ENCODE measurements at regions of chr17 and their contacts with region 1.

Region 1: GRCh38 chr17:75325827-75326225 is 36.6 kb upstream of the SLC25A19 start:
- DNase-seq: no peak
- ATAC-seq: no peak
- H3K4me3 Mint-ChIP-seq: peak overlapping the region; percentile 57
- H3K27ac Mint-ChIP-seq: peak overlapping the region; percentile 88
- H3K4me1 Mint-ChIP-seq: peaks cover 82% of the 10 kb centered on the region
- H3K27me3 Mint-ChIP-seq: no peaks in the 10 kb centered on the region
- CTCF ChIP-seq: no peak

Region 2: DNA sequence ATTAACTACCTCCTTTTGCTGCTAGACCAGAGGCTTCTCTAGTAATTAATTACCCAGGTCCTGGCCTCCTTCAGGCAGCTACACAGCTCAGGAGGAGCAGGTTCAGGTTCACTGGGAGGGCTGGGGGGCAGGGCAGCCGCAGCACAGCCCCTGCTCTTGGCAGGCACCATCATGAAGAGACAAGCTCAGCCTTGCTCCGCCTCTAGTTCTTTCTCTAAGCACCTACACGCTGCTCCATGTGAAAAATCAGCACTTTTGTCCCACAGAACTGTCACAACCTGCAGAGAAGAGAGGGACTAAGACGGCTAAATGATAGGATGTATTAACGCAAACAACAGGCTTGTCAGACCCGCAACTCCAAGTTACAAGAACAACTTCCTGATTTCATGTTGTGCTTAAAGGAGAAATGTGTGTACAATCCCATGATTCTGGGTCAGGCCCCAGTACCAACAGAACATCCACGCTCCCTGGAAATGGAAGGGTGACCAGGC is 26.3 kb after region 1 on chr17:
- CTCF ChIA-PET with region 1: interaction called, 9 read pairs
- POLR2A ChIA-PET with region 1: interaction called, 18 read pairs
- intact Hi-C with region 1: no loop called
- DNase-seq: no peak
- ATAC-seq: peak; percentile 45
- H3K4me3 Mint-ChIP-seq: peak overlapping the region; percentile 41
- H3K27ac Mint-ChIP-seq: peak overlapping the region; percentile 57
- H3K4me1 Mint-ChIP-seq: peaks cover 88% of the 10 kb centered on the region
- H3K27me3 Mint-ChIP-seq: no peaks in the 10 kb centered on the region
- CTCF ChIP-seq: no peak

Region 3: DNA sequence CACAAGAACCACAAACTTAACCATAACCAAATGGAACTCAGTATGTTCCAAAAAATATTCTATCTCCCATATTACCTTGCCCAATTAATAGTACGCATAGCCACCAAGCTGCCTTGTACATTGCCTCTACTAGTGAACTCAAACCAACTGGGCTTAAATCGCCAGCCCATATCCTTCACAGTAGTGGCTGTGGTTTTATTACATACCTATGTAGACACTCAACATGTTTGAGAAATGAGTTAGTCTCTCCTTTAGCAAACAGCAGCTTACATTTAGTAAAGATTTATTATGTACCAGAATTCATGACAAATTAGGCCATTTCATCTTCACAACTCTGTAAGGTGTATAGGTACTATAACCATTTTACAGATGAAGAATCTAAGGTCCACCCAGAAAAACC is 38.3 kb after region 1 on chr17:
- CTCF ChIA-PET with region 1: no interaction called
- POLR2A ChIA-PET with region 1: interaction called, 8 read pairs
- intact Hi-C with region 1: loop called (anchors 5 kb)
- DNase-seq: no peak
- ATAC-seq: no peak
- H3K4me3 Mint-ChIP-seq: peak overlapping the region; percentile 33
- H3K27ac Mint-ChIP-seq: peak overlapping the region; percentile 50
- H3K4me1 Mint-ChIP-seq: peaks cover 96% of the 10 kb centered on the region
- H3K27me3 Mint-ChIP-seq: no peaks in the 10 kb centered on the region
- CTCF ChIP-seq: no peak

Region 4: GRCh38 chr17:75456417-75457046 is 130.7 kb after region 1 on chr17 and contains the start of gene TMEM94:
- CTCF ChIA-PET with region 1: no interaction called
- POLR2A ChIA-PET with region 1: no interaction called
- intact Hi-C with region 1: no loop called
- DNase-seq: peak; percentile 74
- ATAC-seq: peak; percentile 94
- H3K4me3 Mint-ChIP-seq: peak within 1 kb of the TSS; percentile 91
- H3K27ac Mint-ChIP-seq: peak within 1 kb of the TSS; percentile 88
- H3K4me1 Mint-ChIP-seq: peaks cover 41% of the 10 kb centered on the region
- H3K27me3 Mint-ChIP-seq: no peaks in the 10 kb centered on the region
- CTCF ChIP-seq: no peak
- total RNA-seq, gene TMEM94: 80.3 and 86.6 TPM in 2 replicates